Activated T-helper 1 cell treated with anti-CD3 and anti-CD28 coated beads, Interleukin-12 subunit alpha, Interleukin-12 subunit beta, Interleukin-2, Interleukin-4 antibody, amounts not matched to agents 30 ng/mL and 10 ng/mL and 1 ng/mL, durations not matched to agents 14 hours and 24 hours and 36 hours (primary cell): ENCODE measurements at regions of chr6 and their contacts with region 1.

Region 1: GRCh38 chr6:11144393-11144851 is 32.9 kb upstream of the ERVFRD-1 start:
- DNase-seq: peak; percentile 65
- H3K4me3 Mint-ChIP-seq: no peak overlapping the region
- H3K27ac Mint-ChIP-seq: no peak overlapping the region
- H3K4me1 Mint-ChIP-seq: peaks cover 16% of the 10 kb centered on the region
- H3K27me3 Mint-ChIP-seq: peaks cover 1% of the 10 kb centered on the region

Region 2: GRCh38 chr6:10954590-10955010 is 189.8 kb before region 1 on chr6:
- intact Hi-C with region 1: loop called (anchors 5 kb)
- DNase-seq: peak; percentile 50
- H3K4me3 Mint-ChIP-seq: no peak overlapping the region
- H3K27ac Mint-ChIP-seq: no peak overlapping the region
- H3K4me1 Mint-ChIP-seq: no peaks in the 10 kb centered on the region
- H3K27me3 Mint-ChIP-seq: peaks cover 7% of the 10 kb centered on the region

Region 3: DNA sequence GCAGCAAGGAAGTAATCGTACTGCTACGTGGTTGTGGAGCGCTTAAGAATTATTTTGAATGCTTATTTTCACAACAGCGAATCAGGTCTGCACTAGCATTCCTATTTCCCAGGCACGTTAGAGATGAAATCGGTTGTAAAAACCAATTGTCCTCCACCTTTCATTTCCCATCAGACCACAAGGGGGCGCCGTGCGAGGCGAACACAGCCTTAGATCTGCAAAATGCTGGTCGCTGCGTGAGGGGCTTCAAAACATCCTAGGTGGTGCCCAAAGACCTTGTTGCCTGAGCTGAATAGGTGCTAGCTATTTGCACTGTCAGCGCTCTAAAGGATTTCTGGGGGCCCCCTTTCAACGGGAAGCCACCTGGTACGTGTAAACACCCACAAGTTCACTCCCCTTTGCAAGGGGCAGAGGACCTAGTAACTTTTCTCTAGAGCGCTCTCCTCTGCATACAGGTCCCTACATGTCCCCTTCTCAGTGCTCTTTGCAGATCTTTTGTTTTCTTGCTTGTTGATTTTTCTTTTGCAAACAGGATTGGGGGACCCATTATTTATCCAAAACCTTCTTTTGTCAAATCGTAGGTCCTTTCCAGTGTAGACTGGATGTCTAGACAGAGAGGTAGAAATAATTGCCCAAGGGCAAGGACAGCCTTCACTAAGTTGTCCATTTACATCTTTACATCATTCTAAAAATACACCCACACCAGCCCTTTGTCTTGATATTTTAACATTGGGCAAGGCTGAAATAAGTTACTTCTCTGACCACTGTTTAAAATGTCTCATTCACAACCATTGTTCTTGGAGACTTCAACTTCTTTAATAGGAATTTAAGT is 28.3 kb after region 1 on chr6:
- intact Hi-C with region 1: loop called (anchors 1 kb)
- DNase-seq: peak; percentile 47
- H3K4me3 Mint-ChIP-seq: no peak overlapping the region
- H3K27ac Mint-ChIP-seq: no peak overlapping the region
- H3K4me1 Mint-ChIP-seq: peaks cover 25% of the 10 kb centered on the region
- H3K27me3 Mint-ChIP-seq: peaks cover 3% of the 10 kb centered on the region

Region 4: DNA sequence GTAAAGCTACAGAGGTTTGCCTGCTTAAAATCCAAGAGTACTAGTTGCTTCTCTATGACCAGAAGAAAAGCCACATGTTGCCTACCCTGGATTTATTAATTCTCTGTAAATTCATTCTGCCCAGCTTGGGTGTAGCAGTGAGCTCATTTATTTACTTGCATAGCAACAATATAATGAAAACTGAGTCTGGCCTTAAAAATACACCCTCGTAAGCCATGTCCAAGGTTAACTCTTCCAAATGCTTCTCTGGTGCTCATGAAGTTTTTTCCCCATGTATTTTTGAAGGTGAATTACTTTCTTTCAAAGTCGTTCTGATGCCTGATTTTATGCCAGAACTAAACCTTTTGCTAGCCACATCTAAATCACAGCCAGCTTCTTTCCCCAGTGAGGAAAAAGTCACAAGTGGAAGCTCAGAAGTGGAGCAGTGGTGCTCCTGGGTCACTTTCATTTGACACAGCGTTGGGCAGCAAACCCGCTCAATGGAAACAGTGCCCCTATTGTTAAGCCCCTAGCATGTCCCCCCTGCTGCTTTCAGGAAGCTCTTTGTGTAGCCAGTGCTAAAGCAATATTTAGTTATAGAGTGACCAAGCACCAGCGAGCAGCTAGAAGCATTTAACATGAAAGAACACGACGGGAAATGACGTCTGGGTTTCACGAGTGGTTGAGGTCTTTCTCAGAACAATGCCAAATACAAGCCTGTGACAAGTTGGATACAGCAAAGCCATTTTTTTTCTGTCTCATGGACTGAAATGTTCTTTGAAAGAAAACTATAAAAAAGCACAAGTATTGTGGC is 58.3 kb after region 1 on chr6:
- intact Hi-C with region 1: loop called (anchors 2 kb)
- DNase-seq: peak; percentile 43
- H3K4me3 Mint-ChIP-seq: peak overlapping the region; percentile 54
- H3K27ac Mint-ChIP-seq: peak overlapping the region; percentile 92
- H3K4me1 Mint-ChIP-seq: peaks cover 86% of the 10 kb centered on the region
- H3K27me3 Mint-ChIP-seq: no peaks in the 10 kb centered on the region

Region 5: GRCh38 chr6:11317885-11318771 is 173.7 kb after region 1 on chr6:
- intact Hi-C with region 1: loop called (anchors 1 kb)
- DNase-seq: peak; percentile 63
- H3K4me3 Mint-ChIP-seq: no peak overlapping the region
- H3K27ac Mint-ChIP-seq: peak overlapping the region; percentile 92
- H3K4me1 Mint-ChIP-seq: peaks cover 64% of the 10 kb centered on the region
- H3K27me3 Mint-ChIP-seq: no peaks in the 10 kb centered on the region

Region 6: GRCh38 chr6:11575408-11576033 is 431.1 kb after region 1 on chr6:
- intact Hi-C with region 1: loop called (anchors 1 kb)
- DNase-seq: peak; percentile 37
- H3K4me3 Mint-ChIP-seq: no peak overlapping the region
- H3K27ac Mint-ChIP-seq: no peak overlapping the region
- H3K4me1 Mint-ChIP-seq: no peaks in the 10 kb centered on the region
- H3K27me3 Mint-ChIP-seq: peaks cover 2% of the 10 kb centered on the region